Breast epithelium (tissue), 4 donors: ENCODE measurements at regions of chr20 and their contacts with region 1.

Region 1: GRCh38 chr20:7022597-7022996 is 255.1 kb downstream of the BMP2 start:
- DNase-seq: no peak
- H3K4me3 ChIP-seq: no peak overlapping the region
- H3K27ac ChIP-seq: no peak overlapping the region
- H3K4me1 ChIP-seq: no peaks in the 10 kb centered on the region
- H3K27me3 ChIP-seq: no peaks in the 10 kb centered on the region
- CTCF ChIP-seq: no peak
- POLR2A ChIP-seq: no peak

Region 2: DNA sequence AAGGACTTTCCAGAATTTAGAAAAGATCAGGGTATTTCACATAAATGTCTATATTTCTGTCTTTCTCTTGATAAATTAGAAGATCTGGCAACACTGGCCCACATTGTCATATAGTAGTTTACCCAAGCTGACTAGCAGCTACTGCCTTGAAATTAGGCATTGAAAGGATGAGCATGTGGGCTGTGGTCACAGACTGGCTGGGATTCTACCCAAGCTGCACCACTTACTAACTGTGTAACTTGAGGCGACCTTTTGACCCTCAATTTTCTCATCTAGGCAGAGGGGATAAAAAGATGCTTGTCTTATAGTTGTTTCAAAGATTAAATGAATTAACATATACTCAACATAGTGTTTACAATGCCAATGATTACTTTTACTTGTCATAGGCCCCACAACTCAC is 407.8 kb before region 1 on chr20:
- intact Hi-C with region 1: loop called (anchors 5 kb)
- DNase-seq: no peak
- H3K4me3 ChIP-seq: no peak overlapping the region
- H3K27ac ChIP-seq: no peak overlapping the region
- H3K4me1 ChIP-seq: no peaks in the 10 kb centered on the region
- H3K27me3 ChIP-seq: no peaks in the 10 kb centered on the region
- CTCF ChIP-seq: no peak
- POLR2A ChIP-seq: no peak

Region 3: DNA sequence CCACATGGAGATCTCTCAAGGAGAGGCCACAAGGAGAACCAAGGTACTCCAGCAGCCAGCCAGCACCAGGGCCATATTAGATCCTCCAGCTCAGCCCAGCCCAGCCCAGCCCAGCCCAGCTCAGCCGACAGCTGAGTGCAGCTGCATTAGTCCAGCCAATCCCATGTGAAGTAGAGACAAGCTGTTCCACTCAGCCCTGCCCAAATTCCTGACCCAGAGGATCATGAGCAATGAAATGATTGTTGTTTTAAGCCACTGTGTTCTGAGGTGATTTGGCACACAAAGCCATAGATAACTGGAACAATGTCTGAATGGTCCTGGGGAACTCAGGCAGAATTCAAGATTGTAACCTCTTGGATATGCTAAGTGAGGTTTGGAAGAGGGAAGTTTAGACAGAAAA is 314.6 kb before region 1 on chr20:
- intact Hi-C with region 1: no loop called
- DNase-seq: no peak
- H3K4me3 ChIP-seq: no peak overlapping the region
- H3K27ac ChIP-seq: no peak overlapping the region
- H3K4me1 ChIP-seq: no peaks in the 10 kb centered on the region
- H3K27me3 ChIP-seq: no peaks in the 10 kb centered on the region
- CTCF ChIP-seq: no peak
- POLR2A ChIP-seq: no peak

Region 4: DNA sequence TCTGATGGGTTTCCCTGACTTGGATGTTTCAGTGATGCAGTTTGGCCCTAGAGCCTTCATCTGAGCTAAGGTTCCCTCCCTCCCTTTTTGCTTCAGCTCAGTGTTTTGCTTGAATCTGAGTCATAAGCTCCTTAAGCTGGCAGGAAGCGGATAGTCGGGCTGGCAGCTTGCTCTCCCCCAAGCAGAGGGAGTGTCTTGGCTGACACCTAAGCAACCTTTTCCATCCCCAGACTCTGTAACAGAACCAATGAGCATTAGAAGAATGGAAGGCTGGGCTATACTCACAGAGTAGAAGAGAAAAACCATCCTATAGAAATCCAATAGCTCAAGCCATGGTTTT is 819.3 kb after region 1 on chr20:
- intact Hi-C with region 1: no loop called
- DNase-seq: no peak
- H3K4me3 ChIP-seq: no peak overlapping the region
- H3K27ac ChIP-seq: no peak overlapping the region
- H3K4me1 ChIP-seq: no peaks in the 10 kb centered on the region
- H3K27me3 ChIP-seq: no peaks in the 10 kb centered on the region
- CTCF ChIP-seq: no peak
- POLR2A ChIP-seq: no peak